ENCODE measurements at regions of chr9 and their contacts with region 1.

Region 1: DNA sequence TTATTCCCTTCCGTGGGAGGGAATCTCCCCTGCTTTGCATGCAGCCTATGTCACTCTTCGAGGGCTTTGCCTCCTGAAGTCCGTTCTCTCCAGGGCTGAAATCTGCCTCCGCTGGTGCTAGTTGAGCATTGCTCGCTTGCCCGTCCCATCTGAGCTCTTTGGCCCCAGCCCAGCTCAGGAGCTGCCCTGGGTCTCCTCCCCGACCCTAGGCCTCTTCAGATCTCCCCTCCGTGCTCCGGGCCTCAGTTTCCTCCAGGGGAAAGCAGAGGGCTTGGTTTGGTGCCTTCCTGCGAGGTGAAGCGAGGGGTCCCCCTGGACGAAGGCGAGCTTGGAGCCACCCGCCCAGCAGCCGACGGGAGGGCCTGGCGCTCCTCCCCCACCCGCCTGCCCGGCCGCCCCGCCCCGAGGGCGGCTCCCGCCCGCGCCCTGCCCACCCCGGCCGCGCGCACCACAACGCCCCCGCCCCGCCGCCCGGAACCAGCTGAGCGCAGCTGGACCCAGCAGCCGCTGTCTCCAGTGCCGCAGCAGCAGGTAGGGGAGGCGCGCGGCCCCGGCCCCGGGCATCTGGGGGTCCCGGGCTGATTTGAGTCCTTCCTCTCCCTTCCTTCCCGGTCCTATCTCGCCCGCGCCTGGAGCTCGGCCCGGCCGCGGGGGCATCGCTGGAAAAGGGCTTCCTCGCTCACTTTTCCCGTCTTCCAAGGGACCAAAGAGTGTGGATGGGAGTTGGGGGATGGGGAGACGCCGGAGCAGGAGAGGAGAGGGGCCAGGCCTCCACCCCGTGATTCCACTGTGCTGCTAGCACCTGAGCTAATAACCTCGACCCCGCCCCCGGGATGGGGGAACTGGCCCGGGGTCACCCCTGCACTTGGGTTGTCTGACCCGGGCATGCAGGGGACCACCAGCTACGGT is at the start of gene GSN:
- DNase-seq: no peak
- ATAC-seq: peak; percentile 94
- H3K4me3 ChIP-seq: peak within 1 kb of the TSS; percentile 65 to 85
- H3K27ac ChIP-seq: peak within 1 kb of the TSS; percentile 27; the same call in 1 of the 2 replicates
- H3K4me1 ChIP-seq: peaks cover 27 to 29% of the 10 kb centered on the region in 2 experiments
- H3K27me3 ChIP-seq: no peaks in the 10 kb centered on the region
- CTCF ChIP-seq: no peak
- POLR2A ChIP-seq: no peak
- RAD21 ChIP-seq: no peak
- total RNA-seq, gene GSN: 71.3 TPM

Region 2: DNA sequence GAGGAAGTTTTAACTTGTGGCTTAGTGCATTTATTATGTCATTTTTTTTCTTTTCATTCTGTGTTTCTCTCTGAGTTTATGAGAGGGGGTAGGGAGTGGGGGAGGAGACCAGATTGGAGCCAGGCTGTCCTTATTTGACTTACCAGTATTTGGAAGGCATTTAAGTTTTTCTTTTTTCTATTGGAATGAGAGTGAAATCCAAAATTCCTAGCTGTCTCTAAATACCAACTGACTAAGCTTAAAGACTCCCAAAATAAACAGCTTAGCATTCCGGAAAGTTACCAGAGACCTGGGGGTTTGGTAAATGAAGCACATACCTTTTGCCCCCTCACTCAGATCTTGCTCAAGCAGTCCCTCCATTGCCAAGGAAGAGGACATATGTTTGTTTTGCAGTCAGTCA is 1316.9 kb before region 1 on chr9:
- CTCF ChIA-PET with region 1: no interaction called
- POLR2A ChIA-PET with region 1: no interaction called
- RAD21 ChIA-PET with region 1: no interaction called
- intact Hi-C with region 1: no loop called
- DNase-seq: no peak
- ATAC-seq: no peak
- H3K4me3 ChIP-seq: no peak overlapping the region
- H3K27ac ChIP-seq: no peak overlapping the region
- H3K4me1 ChIP-seq: no peaks in the 10 kb centered on the region
- H3K27me3 ChIP-seq: peaks cover 48% of the 10 kb centered on the region
- CTCF ChIP-seq: no peak
- POLR2A ChIP-seq: no peak
- RAD21 ChIP-seq: no peak

Region 3: DNA sequence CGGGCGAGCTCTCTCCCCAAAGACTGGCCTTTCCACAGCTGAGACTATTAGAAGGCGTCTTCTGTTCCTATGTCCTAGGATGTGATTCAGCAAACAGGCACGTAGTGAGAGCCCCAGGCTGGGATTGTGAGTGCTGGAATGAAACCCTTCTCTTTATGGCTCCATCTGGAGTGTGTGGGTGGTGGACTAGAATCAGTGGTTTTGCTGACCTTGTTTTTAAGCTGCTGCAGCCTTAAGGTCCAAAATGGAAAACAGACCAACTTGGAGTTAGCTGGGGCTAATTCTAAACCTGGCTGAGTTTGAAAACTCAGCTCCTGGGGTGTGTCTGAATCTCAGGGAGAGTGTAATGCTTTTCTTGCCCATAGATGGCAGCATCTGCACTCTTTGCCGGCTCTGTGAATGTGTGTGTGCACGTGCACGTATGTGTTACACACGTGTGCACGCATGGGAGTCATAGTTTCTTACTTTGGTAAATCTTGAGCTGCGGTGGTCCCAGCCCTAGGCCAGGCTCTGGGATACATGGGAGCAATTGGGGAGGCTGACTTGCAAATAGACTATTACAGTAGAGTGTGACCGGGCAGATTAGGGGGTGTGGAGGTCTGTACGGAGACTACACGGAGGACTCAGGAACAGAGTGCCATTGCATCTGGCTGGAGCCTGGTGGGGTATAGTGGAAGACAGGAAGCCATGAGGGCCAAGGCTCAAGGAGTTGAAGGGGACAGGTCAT is 10.8 kb after region 1 on chr9:
- CTCF ChIA-PET with region 1: interaction called, 19 read pairs
- POLR2A ChIA-PET with region 1: interaction called, 21 read pairs
- RAD21 ChIA-PET with region 1: interaction called in 1 of 2 experiments, 5 read pairs
- intact Hi-C with region 1: no loop called
- DNase-seq: peak; percentile 59
- ATAC-seq: peak; percentile 68
- H3K4me3 ChIP-seq: peak overlapping the region; percentile 0 to 43; a peak in 2 of 4 replicates
- H3K27ac ChIP-seq: peak overlapping the region; percentile 56
- H3K4me1 ChIP-seq: peaks cover 61 to 74% of the 10 kb centered on the region in 2 experiments
- H3K27me3 ChIP-seq: no peaks in the 10 kb centered on the region
- CTCF ChIP-seq: peak in 2 of 3 experiments; percentile 84 to 89; a peak in 4 of 6 replicates
- POLR2A ChIP-seq: no peak
- RAD21 ChIP-seq: no peak

Measured in HCT116 (cell line).